CD4-positive, alpha-beta memory T cell (primary cell): ENCODE measurements at regions of chr17 and their contacts with region 1.

Region 1: GRCh38 chr17:59859444-59860025 is 33.2 kb downstream of the TUBD1 start:
- DNase-seq: peak in 4 of 5 donors; percentile 43 to 57 (median 47)
- H3K4me3 ChIP-seq: no peak overlapping the region
- H3K4me3 Mint-ChIP-seq: no peak overlapping the region
- H3K27ac ChIP-seq: no peak overlapping the region
- H3K27ac Mint-ChIP-seq: peak overlapping the region in 6 of 7 donors; percentile 1 to 60 (median 36)
- H3K4me1 ChIP-seq: peaks cover 5% of the 10 kb centered on the region
- H3K4me1 Mint-ChIP-seq: peaks cover 0 to 9% (median 5%) of the 10 kb centered on the region in 4 donors
- H3K27me3 ChIP-seq: no peaks in the 10 kb centered on the region
- H3K27me3 Mint-ChIP-seq: no peaks in the 10 kb centered on the region

Region 2: GRCh38 chr17:59746849-59747445 is 112.6 kb before region 1 on chr17:
- CTCF ChIA-PET with region 1: no interaction called
- POLR2A ChIA-PET with region 1: interaction called, 17 read pairs
- intact Hi-C with region 1: loop called (anchors 1 kb)
- DNase-seq: peak in 4 of 5 donors; percentile 33 to 38 (median 36)
- H3K4me3 ChIP-seq: no peak overlapping the region
- H3K4me3 Mint-ChIP-seq: no peak overlapping the region
- H3K27ac ChIP-seq: no peak overlapping the region
- H3K27ac Mint-ChIP-seq: no peak overlapping the region
- H3K4me1 ChIP-seq: peaks cover 4% of the 10 kb centered on the region
- H3K4me1 Mint-ChIP-seq: peaks cover 3 to 8% (median 3%) of the 10 kb centered on the region in 4 donors
- H3K27me3 ChIP-seq: no peaks in the 10 kb centered on the region
- H3K27me3 Mint-ChIP-seq: no peaks in the 10 kb centered on the region

Region 3: GRCh38 chr17:59846394-59847165 is 13.0 kb before region 1 on chr17:
- CTCF ChIA-PET with region 1: interaction called, 15 read pairs
- POLR2A ChIA-PET with region 1: interaction called, 3 read pairs
- intact Hi-C with region 1: no loop called
- DNase-seq: peak in 4 of 5 donors; percentile 28 to 74 (median 44)
- H3K4me3 ChIP-seq: peak overlapping the region in 1 of 2 donors; percentile 1
- H3K4me3 Mint-ChIP-seq: peak overlapping the region in 7 of 8 donors; percentile 21 to 70 (median 39)
- H3K27ac ChIP-seq: peak overlapping the region; percentile 62
- H3K27ac Mint-ChIP-seq: peak overlapping the region; percentile 82 to 90 (median 86)
- H3K4me1 ChIP-seq: peaks cover 74% of the 10 kb centered on the region
- H3K4me1 Mint-ChIP-seq: peaks cover 43 to 73% (median 60%) of the 10 kb centered on the region in 4 donors
- H3K27me3 ChIP-seq: no peaks in the 10 kb centered on the region
- H3K27me3 Mint-ChIP-seq: no peaks in the 10 kb centered on the region

Region 4: GRCh38 chr17:59903455-59903854 is 43.9 kb after region 1 on chr17:
- CTCF ChIA-PET with region 1: no interaction called
- POLR2A ChIA-PET with region 1: no interaction called
- intact Hi-C with region 1: no loop called
- DNase-seq: no peak
- H3K4me3 ChIP-seq: no peak overlapping the region
- H3K4me3 Mint-ChIP-seq: peak overlapping the region in 1 of 8 donors; percentile 18
- H3K27ac ChIP-seq: no peak overlapping the region
- H3K27ac Mint-ChIP-seq: peak overlapping the region in 5 of 7 donors; percentile 17 to 48 (median 26)
- H3K4me1 ChIP-seq: peaks cover 25% of the 10 kb centered on the region
- H3K4me1 Mint-ChIP-seq: peaks cover 16 to 42% (median 19%) of the 10 kb centered on the region in 4 donors
- H3K27me3 ChIP-seq: no peaks in the 10 kb centered on the region
- H3K27me3 Mint-ChIP-seq: no peaks in the 10 kb centered on the region